T-cell (primary cell): ENCODE measurements at regions of chr6 and their contacts with region 1.

Region 1: DNA sequence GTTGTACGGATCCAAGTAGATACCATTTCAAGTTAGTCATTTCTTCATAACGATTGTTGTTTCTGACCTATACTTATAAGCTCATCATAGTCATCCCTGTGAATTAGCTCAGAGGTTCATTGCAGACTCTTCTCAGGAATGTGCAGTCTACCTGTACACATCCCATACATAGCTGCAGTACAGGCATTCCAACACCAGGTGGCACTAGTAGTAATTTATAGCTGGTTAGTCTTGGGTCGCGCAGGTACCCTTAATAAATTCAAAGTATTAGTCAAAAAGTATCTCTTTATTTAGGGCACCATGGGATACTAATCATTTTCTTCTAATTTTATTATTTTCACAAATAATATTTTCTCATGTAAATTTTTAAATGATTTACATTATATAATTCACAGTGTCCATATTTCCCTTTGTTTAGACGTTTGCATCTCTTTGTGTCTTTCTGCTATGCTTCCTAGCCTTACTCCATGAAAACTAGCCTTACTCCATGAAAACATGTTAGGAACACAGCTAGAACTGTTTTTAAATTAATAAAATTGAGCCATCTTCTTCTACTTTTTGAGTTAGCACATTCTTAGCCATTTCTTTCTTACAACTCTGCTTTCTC is 128.6 kb upstream of the FAM83B start:
- DNase-seq: peak in 20 of 35 experiments; percentile 1 to 48 (median 11)
- ATAC-seq: no peak
- H3K4me3 ChIP-seq: no peak overlapping the region
- H3K4me3 Mint-ChIP-seq: no peak overlapping the region
- H3K27ac ChIP-seq: no peak overlapping the region
- H3K27ac Mint-ChIP-seq: no peak overlapping the region
- H3K4me1 ChIP-seq: no peaks in the 10 kb centered on the region
- H3K4me1 Mint-ChIP-seq: no peaks in the 10 kb centered on the region
- H3K27me3 ChIP-seq: no peaks in the 10 kb centered on the region
- H3K27me3 Mint-ChIP-seq: no peaks in the 10 kb centered on the region

Region 2: GRCh38 chr6:54621285-54621684 is 96.7 kb before region 1 on chr6:
- CTCF ChIA-PET with region 1: interaction called in 1 of 2 experiments, 11 read pairs
- POLR2A ChIA-PET with region 1: no interaction called
- DNase-seq: no peak
- ATAC-seq: no peak
- H3K4me3 ChIP-seq: no peak overlapping the region
- H3K4me3 Mint-ChIP-seq: no peak overlapping the region
- H3K27ac ChIP-seq: no peak overlapping the region
- H3K27ac Mint-ChIP-seq: no peak overlapping the region
- H3K4me1 ChIP-seq: no peaks in the 10 kb centered on the region
- H3K4me1 Mint-ChIP-seq: no peaks in the 10 kb centered on the region
- H3K27me3 ChIP-seq: no peaks in the 10 kb centered on the region
- H3K27me3 Mint-ChIP-seq: no peaks in the 10 kb centered on the region

Region 3: GRCh38 chr6:54706844-54707605 is 10.9 kb before region 1 on chr6:
- CTCF ChIA-PET with region 1: interaction called, 3 to 11 read pairs
- POLR2A ChIA-PET with region 1: no interaction called
- DNase-seq: no peak
- ATAC-seq: no peak
- H3K4me3 ChIP-seq: no peak overlapping the region
- H3K4me3 Mint-ChIP-seq: no peak overlapping the region
- H3K27ac ChIP-seq: no peak overlapping the region
- H3K27ac Mint-ChIP-seq: no peak overlapping the region
- H3K4me1 ChIP-seq: no peaks in the 10 kb centered on the region
- H3K4me1 Mint-ChIP-seq: no peaks in the 10 kb centered on the region
- H3K27me3 ChIP-seq: no peaks in the 10 kb centered on the region
- H3K27me3 Mint-ChIP-seq: no peaks in the 10 kb centered on the region

Region 4: GRCh38 chr6:54835176-54835575 is 117.2 kb after region 1 on chr6:
- CTCF ChIA-PET with region 1: no interaction called
- POLR2A ChIA-PET with region 1: no interaction called
- DNase-seq: no peak
- ATAC-seq: no peak
- H3K4me3 ChIP-seq: no peak overlapping the region
- H3K4me3 Mint-ChIP-seq: no peak overlapping the region
- H3K27ac ChIP-seq: no peak overlapping the region
- H3K27ac Mint-ChIP-seq: no peak overlapping the region
- H3K4me1 ChIP-seq: no peaks in the 10 kb centered on the region
- H3K4me1 Mint-ChIP-seq: no peaks in the 10 kb centered on the region
- H3K27me3 ChIP-seq: no peaks in the 10 kb centered on the region
- H3K27me3 Mint-ChIP-seq: no peaks in the 10 kb centered on the region

Region 5: GRCh38 chr6:54846243-54846856 is 128.4 kb after region 1 on chr6 and contains the start of gene FAM83B:
- CTCF ChIA-PET with region 1: no interaction called
- POLR2A ChIA-PET with region 1: no interaction called
- DNase-seq: no peak
- ATAC-seq: no peak
- H3K4me3 ChIP-seq: no peak within 1 kb of the TSS
- H3K4me3 Mint-ChIP-seq: no peak within 1 kb of the TSS
- H3K27ac ChIP-seq: no peak within 1 kb of the TSS
- H3K27ac Mint-ChIP-seq: no peak within 1 kb of the TSS
- H3K4me1 ChIP-seq: no peaks in the 10 kb centered on the region
- H3K4me1 Mint-ChIP-seq: no peaks in the 10 kb centered on the region
- H3K27me3 ChIP-seq: peaks cover 11 to 13% of the 10 kb centered on the region in 2 experiments
- H3K27me3 Mint-ChIP-seq: peaks cover 17 to 18% of the 10 kb centered on the region in 2 donors
- total RNA-seq, gene FAM83B: 0.18 TPM in 1 of 5 donors, not detected in the others